ENCODE measurements at regions of chr20 and their contacts with region 1.

Region 1: GRCh38 chr20:4195499-4195898 is 180.1 kb upstream of the RNF24 start:
- DNase-seq: peak; percentile 60
- ATAC-seq: peak; percentile 69
- H3K4me3 ChIP-seq: no peak overlapping the region
- H3K27ac ChIP-seq: no peak overlapping the region
- H3K4me1 ChIP-seq: peaks cover 33% of the 10 kb centered on the region
- H3K27me3 ChIP-seq: no peaks in the 10 kb centered on the region
- CTCF ChIP-seq: peak; percentile 89

Region 2: DNA sequence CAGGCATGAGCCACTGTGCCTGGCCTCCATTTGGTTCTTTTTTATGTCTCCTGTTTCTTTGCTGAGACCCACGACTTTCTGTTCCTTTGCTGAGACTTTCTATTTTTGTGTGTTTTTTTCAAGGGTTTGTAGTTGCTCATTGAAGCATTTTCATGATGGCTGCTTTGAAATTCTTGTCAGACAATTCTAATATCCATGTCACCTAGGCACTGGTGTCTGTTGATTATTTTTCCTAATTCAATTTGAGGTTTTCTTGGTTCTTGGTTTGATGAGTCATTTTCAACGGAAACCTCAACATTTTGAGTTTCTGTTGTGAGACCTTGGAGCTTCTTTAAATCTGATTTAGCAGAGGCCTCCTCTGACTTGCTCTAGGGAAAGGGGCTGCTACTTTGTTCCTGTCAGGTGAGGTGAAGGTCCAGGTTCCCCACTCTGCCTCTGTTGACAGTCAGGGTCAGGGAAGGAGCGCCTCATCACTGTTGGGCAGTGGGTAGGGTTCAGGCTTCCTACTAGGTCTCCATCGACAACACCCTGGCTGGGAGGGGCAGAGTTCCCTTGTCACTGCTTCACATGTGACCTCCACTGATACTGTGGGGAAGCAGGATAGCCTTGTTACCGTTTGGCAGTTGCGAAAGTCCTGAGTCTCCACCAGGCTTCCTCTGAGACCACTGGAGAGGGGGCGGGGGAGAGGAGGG is 112.9 kb before region 1 on chr20:
- CTCF ChIA-PET with region 1: interaction called, 12 read pairs
- POLR2A ChIA-PET with region 1: no interaction called
- intact Hi-C with region 1: no loop called
- DNase-seq: peak; percentile 25
- ATAC-seq: no peak
- H3K4me3 ChIP-seq: no peak overlapping the region
- H3K27ac ChIP-seq: no peak overlapping the region
- H3K4me1 ChIP-seq: peaks cover 9% of the 10 kb centered on the region; the same call in 1 of the 2 replicates
- H3K27me3 ChIP-seq: no peaks in the 10 kb centered on the region
- CTCF ChIP-seq: no peak

Region 3: GRCh38 chr20:4108495-4109306 is 86.8 kb before region 1 on chr20:
- CTCF ChIA-PET with region 1: interaction called, 3 read pairs
- POLR2A ChIA-PET with region 1: no interaction called
- intact Hi-C with region 1: loop called (anchors 2 kb)
- DNase-seq: peak; percentile 87
- ATAC-seq: peak; percentile 58
- H3K4me3 ChIP-seq: no peak overlapping the region
- H3K27ac ChIP-seq: peak overlapping the region; percentile 85
- H3K4me1 ChIP-seq: peaks cover 39% of the 10 kb centered on the region
- H3K27me3 ChIP-seq: no peaks in the 10 kb centered on the region
- CTCF ChIP-seq: peak; percentile 99

Region 4: GRCh38 chr20:4160761-4161305 is 34.7 kb before region 1 on chr20:
- CTCF ChIA-PET with region 1: no interaction called
- POLR2A ChIA-PET with region 1: no interaction called
- intact Hi-C with region 1: no loop called
- DNase-seq: peak; percentile 38
- ATAC-seq: peak; percentile 32
- H3K4me3 ChIP-seq: no peak overlapping the region
- H3K27ac ChIP-seq: peak overlapping the region; percentile 67; the same call in 1 of the 2 replicates
- H3K4me1 ChIP-seq: peaks cover 31% of the 10 kb centered on the region
- H3K27me3 ChIP-seq: no peaks in the 10 kb centered on the region
- CTCF ChIP-seq: no peak

Region 5: DNA sequence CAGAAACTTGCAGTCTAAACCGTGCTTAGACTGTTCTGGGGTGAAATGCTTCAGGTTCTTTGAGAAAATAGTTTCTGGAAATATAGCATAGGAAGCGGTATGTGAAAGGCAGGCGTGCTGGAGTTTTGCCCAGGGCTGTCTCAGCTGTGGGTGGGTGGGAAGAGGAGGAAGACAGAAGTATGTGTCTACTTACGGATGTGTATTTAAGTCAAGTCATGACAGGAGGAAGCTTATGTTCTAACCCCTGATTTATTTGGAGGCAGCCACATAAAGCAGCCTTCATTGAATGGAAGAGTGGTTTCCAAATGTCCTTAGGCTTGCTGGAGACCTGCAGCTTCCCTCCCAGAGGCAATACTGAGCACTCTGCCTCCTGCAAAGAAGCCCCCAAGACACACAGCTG is 180.4 kb after region 1 on chr20:
- CTCF ChIA-PET with region 1: no interaction called
- POLR2A ChIA-PET with region 1: no interaction called
- intact Hi-C with region 1: no loop called
- DNase-seq: no peak
- ATAC-seq: peak; percentile 54
- H3K4me3 ChIP-seq: no peak overlapping the region
- H3K27ac ChIP-seq: no peak overlapping the region
- H3K4me1 ChIP-seq: no peaks in the 10 kb centered on the region
- H3K27me3 ChIP-seq: no peaks in the 10 kb centered on the region
- CTCF ChIP-seq: no peak

Region 6: GRCh38 chr20:4546786-4547185 is 351.3 kb after region 1 on chr20:
- CTCF ChIA-PET with region 1: no interaction called
- POLR2A ChIA-PET with region 1: no interaction called
- intact Hi-C with region 1: no loop called
- DNase-seq: peak; percentile 97
- ATAC-seq: peak; percentile 80
- H3K4me3 ChIP-seq: no peak overlapping the region
- H3K27ac ChIP-seq: peak overlapping the region; percentile 80
- H3K4me1 ChIP-seq: peaks cover 62% of the 10 kb centered on the region
- H3K27me3 ChIP-seq: no peaks in the 10 kb centered on the region
- CTCF ChIP-seq: no peak

Region 7: DNA sequence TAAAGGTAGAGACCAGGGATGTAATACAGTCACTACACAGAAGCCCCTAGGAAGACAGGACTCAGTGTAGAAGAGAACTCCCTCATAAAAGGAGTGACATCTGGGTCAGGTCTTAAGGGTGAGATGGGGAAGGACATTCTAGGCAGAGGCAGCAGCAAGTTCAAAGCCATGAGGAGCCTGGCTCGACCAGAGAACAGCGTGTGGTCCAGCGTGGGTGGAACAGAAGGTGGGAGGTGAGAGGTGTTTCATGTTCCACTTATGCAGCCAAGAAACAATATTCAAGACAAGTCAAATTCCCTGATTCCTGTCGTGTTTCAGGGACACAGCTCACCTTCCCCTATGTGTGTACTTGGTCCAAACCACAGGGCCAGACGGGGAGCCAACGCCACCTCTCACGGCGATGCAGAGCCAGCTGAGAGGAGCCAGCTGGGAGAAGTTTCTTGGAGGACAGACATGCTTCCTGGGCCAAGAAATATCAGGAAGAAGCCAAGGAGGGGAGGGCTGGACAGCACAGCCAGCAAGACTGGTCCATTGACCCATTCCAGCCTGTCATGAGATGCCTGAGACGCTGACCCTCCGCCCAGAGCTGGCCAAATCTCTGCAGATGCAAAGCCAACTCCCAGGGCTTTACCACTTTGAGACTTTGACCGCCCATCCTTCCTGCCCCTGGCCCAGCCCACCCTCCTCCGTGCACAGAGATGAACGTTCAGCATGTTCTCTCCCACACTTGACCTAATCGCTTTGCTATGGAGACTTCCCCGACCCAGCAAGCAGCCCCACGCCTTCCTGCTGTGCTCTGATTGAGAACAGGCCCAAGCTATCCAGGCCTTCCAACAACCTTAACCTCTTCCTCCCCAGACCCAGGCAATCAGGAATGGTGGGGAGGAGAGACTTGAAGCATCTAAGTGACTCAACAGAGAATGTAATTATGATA is 640.0 kb after region 1 on chr20:
- CTCF ChIA-PET with region 1: no interaction called
- POLR2A ChIA-PET with region 1: no interaction called
- intact Hi-C with region 1: no loop called
- DNase-seq: no peak
- ATAC-seq: no peak
- H3K4me3 ChIP-seq: no peak overlapping the region
- H3K27ac ChIP-seq: no peak overlapping the region
- H3K4me1 ChIP-seq: no peaks in the 10 kb centered on the region
- H3K27me3 ChIP-seq: peaks cover 3% of the 10 kb centered on the region; the same call in 1 of the 2 replicates
- CTCF ChIP-seq: no peak